ENCODE measurements at regions of chr4 and their contacts with region 1.

Region 1: DNA sequence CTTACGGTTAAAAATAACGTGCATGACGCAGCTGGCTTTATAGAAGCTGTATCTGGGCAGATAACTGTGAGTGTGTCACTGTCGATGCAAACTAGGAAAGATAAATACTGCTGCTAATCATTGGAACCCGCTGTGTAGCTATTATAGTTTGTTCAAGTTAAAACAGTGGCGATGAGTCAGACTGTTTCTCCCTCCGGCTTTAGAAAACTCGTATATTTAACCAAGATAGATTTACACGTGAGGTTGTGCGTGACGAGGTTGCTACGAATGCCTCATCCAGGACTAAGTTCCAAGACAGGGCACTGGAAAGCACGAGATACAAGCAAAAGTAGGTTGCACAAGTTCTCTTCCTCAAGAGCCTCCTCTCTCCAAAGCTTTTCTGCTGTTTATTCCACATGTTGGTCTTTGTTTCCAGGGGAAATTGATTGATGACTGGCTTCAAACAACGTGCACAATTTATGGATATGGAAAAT is 270.7 kb downstream of the FBXW7 start:
- DNase-seq: peak; percentile 87
- H3K4me3 Mint-ChIP-seq: peak overlapping the region; percentile 50
- H3K27ac Mint-ChIP-seq: peak overlapping the region; percentile 74
- H3K4me1 Mint-ChIP-seq: peaks cover 25% of the 10 kb centered on the region
- H3K27me3 Mint-ChIP-seq: no peaks in the 10 kb centered on the region
- CTCF ChIP-seq: no peak

Region 2: DNA sequence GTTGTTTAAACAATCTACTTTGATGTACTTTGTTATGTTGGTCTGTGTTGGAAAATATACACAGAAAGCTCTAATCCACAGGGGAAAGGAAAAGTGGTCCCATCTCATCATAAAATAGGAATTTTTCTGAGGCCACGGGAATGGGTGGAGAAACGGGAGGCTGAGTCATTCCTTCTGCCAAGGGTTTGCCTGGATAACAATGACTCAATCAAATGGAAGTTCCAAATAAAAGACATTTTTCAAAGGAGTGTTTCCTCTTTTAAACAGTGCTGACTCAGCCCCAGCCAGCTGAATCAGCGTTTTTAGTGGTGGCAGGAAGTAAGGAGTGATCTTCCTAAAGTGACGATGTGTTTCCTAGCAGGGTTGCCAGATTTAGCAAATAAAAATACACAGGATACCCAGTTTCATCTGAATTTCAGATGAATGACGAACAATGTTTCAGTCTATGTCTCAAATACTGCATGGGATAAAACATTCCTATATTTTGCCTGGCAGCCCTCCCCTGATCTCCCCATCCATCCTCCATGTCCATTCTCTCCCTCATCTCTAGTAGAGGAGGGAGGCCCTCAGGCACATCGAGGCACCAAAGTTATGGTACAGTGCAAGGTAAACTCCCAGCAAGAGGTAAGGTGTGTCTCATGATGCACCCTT is 158.9 kb before region 1 on chr4:
- CTCF ChIA-PET with region 1: no interaction called
- POLR2A ChIA-PET with region 1: interaction called, 3 read pairs
- intact Hi-C with region 1: loop called (anchors 2 kb)
- DNase-seq: peak; percentile 93
- H3K4me3 Mint-ChIP-seq: peak overlapping the region; percentile 28
- H3K27ac Mint-ChIP-seq: peak overlapping the region; percentile 80
- H3K4me1 Mint-ChIP-seq: peaks cover 25% of the 10 kb centered on the region
- H3K27me3 Mint-ChIP-seq: no peaks in the 10 kb centered on the region
- CTCF ChIP-seq: no peak

Region 3: DNA sequence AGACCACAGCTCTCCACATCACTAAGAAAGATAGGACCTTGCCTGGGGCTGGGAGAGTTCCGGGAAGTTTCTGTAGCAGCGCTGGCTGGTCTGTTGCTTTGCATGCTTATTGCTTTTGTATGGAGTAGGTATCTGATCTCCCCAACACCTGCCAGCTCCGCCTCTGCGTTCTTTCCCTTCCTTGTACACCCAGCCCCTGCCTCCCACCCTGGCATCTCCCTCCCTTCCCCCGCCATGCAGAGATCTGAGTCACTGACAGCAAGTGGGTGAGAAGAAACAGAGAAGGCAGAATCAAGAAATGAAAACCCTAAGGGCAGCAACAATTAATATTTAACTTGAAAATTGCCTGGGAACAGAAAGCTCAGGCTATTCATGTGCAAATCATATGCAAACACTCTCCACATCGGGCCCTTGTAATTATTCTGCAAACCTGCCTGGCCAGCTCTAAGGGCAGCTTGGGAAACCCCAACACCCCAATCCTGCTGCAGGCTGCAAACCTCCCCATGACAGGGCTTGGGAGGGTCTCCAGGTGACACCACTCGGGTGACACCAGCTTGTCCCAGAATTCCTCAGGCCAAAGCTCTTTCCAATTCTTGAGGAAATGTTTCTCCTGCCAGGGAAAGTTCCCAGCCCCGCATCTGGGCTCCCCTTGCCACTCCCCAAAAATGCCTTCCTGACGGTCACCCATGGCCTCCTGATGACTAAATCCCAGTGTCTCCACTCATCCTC is 13.5 kb after region 1 on chr4:
- CTCF ChIA-PET with region 1: interaction called, 6 read pairs
- POLR2A ChIA-PET with region 1: interaction called, 18 read pairs
- intact Hi-C with region 1: no loop called
- DNase-seq: no peak
- H3K4me3 Mint-ChIP-seq: no peak overlapping the region
- H3K27ac Mint-ChIP-seq: no peak overlapping the region
- H3K4me1 Mint-ChIP-seq: peaks cover 21% of the 10 kb centered on the region
- H3K27me3 Mint-ChIP-seq: no peaks in the 10 kb centered on the region
- CTCF ChIP-seq: no peak

Region 4: DNA sequence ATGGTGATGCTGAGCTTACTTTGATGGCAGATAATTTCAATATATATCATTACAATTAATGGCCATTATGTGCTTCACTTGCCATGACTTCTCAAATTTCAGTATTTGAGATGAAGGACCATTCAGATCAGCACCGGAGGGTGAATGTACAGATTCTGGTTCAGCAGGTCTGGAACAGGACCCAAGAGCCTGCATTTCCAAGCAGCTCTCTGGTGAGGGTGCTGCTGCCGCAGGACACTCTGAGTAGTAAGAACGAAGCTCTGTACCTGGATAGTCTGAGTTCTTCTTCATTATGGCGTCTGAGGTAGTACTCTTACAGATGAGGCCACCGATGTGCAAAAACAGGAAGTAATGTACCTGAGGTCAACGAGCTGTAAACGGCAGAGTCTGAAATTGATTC is 42.5 kb after region 1 on chr4:
- CTCF ChIA-PET with region 1: no interaction called
- POLR2A ChIA-PET with region 1: interaction called, 15 read pairs
- intact Hi-C with region 1: no loop called
- DNase-seq: no peak
- H3K4me3 Mint-ChIP-seq: no peak overlapping the region
- H3K27ac Mint-ChIP-seq: no peak overlapping the region
- H3K4me1 Mint-ChIP-seq: no peaks in the 10 kb centered on the region
- H3K27me3 Mint-ChIP-seq: no peaks in the 10 kb centered on the region
- CTCF ChIP-seq: no peak

Region 5: DNA sequence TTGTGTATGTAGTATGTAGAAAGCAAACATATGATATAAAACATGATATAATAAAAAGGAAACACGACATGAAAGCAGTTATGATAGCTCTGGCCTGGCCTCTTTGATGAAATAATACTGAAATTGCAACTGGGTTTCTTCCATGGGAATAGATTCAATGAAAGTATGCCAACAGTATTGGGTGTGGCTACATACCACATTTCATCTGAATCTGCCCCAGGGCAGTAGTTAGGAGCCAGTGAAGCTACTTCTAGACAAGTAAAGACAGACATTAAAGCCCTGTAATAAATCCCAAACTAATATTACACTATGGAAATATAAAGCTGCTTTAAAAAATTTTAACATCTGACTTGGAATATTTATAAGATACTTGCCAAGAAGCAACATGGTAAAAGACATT is 63.4 kb after region 1 on chr4:
- CTCF ChIA-PET with region 1: interaction called, 3 read pairs
- POLR2A ChIA-PET with region 1: interaction called, 19 read pairs
- intact Hi-C with region 1: no loop called
- DNase-seq: peak; percentile 87
- H3K4me3 Mint-ChIP-seq: no peak overlapping the region
- H3K27ac Mint-ChIP-seq: peak overlapping the region; percentile 49
- H3K4me1 Mint-ChIP-seq: peaks cover 24% of the 10 kb centered on the region
- H3K27me3 Mint-ChIP-seq: no peaks in the 10 kb centered on the region
- CTCF ChIP-seq: no peak

Measured in MCF 10A (cell line).